Ascending aorta (tissue), 2 donors: ENCODE measurements at regions of chr15 and their contacts with region 1.

Region 1: GRCh38 chr15:28107889-28108246 is 8.8 kb upstream of the OCA2 start:
- DNase-seq: no peak
- H3K4me3 ChIP-seq: peak overlapping the region; percentile 73 to 75
- H3K27ac ChIP-seq: peak overlapping the region; percentile 67 to 83
- H3K4me1 ChIP-seq: peaks cover 3 to 24% of the 10 kb centered on the region in 2 donors
- H3K27me3 ChIP-seq: no peaks in the 10 kb centered on the region
- CTCF ChIP-seq: no peak

Region 2: DNA sequence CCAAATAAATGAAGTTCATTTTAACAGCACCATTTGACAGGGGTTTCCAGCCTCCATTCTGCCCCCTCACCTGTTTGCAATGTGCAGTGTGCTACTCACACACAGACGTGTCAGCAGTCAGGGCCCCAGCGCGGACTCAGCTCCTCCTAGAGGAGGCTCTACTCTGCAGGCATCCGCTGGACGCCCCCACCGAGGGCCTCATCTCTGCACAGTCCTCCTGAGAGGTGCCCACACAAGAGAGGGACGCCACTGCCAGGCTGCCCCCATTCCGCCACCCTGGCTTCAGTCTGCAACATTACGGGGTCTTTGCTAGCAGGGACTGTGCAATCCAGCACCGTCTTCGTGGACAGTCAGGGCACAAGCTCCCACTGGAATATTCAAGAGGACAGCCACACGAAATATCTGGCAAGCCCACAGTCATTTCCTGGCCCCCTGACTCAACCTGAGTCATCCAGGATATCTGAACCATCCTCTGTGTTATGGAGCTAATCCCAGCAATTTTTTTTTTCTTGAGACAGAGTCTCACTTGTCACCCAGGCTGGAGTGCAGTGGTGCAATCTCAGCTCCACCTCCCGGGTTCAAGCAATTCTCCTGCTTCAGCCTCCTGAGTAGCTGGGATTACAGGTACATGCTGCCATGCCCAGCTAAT is 263.7 kb before region 1 on chr15:
- intact Hi-C with region 1: no loop called
- DNase-seq: no peak
- H3K4me3 ChIP-seq: no peak overlapping the region
- H3K27ac ChIP-seq: no peak overlapping the region
- H3K4me1 ChIP-seq: no peaks in the 10 kb centered on the region
- H3K27me3 ChIP-seq: no peaks in the 10 kb centered on the region
- CTCF ChIP-seq: no peak

Region 3: GRCh38 chr15:27902680-27903385 is 205.0 kb before region 1 on chr15:
- intact Hi-C with region 1: no loop called
- DNase-seq: no peak
- H3K4me3 ChIP-seq: no peak overlapping the region
- H3K27ac ChIP-seq: no peak overlapping the region
- H3K4me1 ChIP-seq: no peaks in the 10 kb centered on the region
- H3K27me3 ChIP-seq: no peaks in the 10 kb centered on the region
- CTCF ChIP-seq: no peak

Region 4: DNA sequence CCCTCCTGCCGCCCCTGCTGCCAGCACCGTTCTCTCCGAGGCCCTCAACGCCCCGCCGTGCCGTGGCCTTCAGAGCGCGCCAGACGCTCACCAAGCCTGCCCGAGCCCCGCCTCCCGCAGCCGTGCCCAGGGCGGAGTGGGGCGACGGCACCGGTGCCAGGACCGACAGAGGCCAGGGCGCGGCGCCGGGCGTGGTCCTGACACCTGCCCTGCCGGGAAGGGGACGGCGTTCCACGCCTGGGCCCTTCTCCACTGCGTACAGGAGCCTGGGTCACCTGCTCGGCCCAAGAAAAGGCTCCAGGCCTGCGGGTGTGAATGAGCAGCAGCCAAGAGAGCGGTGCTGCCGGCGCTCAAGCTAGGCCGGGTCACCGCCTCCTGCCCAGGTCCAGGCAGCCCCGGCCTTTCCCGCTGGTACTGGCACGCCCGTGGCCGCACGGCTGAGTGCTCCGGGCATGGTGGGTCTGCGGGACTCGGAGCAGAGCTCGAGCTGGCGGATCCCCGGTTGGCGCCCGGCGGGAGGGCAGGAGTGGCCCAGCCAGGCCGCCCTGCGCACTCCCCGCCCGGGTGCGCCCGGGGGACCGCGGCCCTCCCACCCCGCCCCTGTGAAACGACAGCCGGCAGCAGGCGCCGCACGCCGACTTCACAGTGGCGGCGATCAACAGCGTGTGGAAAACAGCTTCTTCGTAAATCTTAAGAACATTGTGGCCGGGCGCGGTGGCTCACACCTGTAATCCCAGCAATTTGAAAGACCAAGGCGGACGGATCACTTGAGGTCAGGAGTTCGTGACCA is 12.9 kb before region 1 on chr15:
- intact Hi-C with region 1: loop called (anchors 2 kb)
- DNase-seq: peak in 1 of 2 donors; percentile 77
- H3K4me3 ChIP-seq: peak overlapping the region; percentile 60 to 71
- H3K27ac ChIP-seq: peak overlapping the region; percentile 96
- H3K4me1 ChIP-seq: peaks cover 9 to 35% of the 10 kb centered on the region in 2 donors
- H3K27me3 ChIP-seq: no peaks in the 10 kb centered on the region
- CTCF ChIP-seq: no peak

Region 5: DNA sequence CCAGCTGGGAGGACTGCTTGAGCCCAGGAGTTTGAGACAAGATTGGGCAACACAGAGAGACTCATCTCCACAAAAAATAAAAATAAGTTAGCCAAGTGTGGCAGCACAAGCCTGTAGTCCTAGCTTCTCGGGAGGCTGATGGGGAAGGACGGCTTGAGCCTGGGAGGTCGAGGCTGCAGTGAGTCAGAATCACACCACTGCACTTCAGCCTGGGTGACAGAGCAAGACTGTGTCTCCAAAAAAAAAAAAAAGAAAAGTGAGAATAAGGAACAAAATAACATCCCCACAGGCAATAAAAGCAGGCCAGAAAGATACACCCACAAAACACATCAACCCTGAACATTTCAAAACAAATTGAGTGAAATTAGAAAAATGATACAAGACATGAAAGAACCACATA is 39.9 kb after region 1 on chr15:
- intact Hi-C with region 1: no loop called
- DNase-seq: no peak
- H3K4me3 ChIP-seq: no peak overlapping the region
- H3K27ac ChIP-seq: no peak overlapping the region
- H3K4me1 ChIP-seq: no peaks in the 10 kb centered on the region
- H3K27me3 ChIP-seq: no peaks in the 10 kb centered on the region
- CTCF ChIP-seq: no peak